Gastrocnemius medialis (tissue), 4 donors: ENCODE measurements at regions of chr16 and their contacts with region 1.

Region 1: DNA sequence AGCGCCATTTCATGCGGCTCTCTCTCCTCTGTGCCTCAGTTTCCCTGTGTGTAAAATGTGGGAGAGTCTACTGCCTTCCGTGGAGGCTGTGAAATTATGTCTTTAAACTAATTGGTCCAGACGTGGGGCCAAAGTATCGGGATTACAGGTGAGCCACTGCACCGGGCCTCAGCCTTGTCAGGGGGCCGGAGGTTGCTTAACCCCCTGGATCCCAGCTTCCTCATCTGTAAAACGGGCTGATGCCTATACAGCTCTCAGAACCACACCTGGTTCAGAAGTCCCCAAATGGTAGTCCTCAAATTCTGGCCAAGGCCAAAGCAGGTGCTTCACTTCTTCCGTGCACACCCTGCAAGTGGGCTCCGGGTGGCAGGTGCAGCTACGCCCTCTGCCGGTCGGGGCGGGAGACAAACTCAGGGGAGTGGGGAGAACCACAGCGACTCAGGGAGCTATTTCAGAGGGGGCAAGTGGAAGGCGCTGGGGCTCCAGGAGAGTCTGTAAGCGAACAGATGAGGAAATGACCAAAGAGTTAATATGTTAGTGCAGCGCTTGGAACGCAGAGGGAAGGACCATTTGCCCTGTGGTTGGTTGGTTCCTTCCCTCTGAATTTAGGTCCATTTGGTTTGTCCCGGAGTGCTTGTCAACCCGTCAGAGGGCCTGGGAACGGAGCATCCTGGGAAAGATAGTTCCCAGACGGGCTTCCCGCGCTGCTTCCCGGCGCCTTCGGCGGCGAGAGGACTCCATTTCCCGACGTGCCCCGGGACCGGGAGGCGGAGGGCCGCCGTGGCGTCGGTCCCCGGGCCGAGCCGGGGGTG is at the start of gene MGRN1:
- DNase-seq: peak; percentile 93 to 95
- ATAC-seq: peak; percentile 97 to 98
- H3K4me3 ChIP-seq: peak within 1 kb of the TSS; percentile 77 to 97 (median 82)
- H3K27ac ChIP-seq: peak within 1 kb of the TSS; percentile 88 to 96 (median 94)
- H3K4me1 ChIP-seq: peaks cover 19% of the 10 kb centered on the region in 2 donors
- H3K27me3 ChIP-seq: no peaks in the 10 kb centered on the region
- CTCF ChIP-seq: peak; percentile 91 to 97 (median 95)
- POLR2A ChIP-seq: no peak
- total RNA-seq, gene MGRN1: 33.8 to 62.9 (median 55.0) TPM

Region 2: DNA sequence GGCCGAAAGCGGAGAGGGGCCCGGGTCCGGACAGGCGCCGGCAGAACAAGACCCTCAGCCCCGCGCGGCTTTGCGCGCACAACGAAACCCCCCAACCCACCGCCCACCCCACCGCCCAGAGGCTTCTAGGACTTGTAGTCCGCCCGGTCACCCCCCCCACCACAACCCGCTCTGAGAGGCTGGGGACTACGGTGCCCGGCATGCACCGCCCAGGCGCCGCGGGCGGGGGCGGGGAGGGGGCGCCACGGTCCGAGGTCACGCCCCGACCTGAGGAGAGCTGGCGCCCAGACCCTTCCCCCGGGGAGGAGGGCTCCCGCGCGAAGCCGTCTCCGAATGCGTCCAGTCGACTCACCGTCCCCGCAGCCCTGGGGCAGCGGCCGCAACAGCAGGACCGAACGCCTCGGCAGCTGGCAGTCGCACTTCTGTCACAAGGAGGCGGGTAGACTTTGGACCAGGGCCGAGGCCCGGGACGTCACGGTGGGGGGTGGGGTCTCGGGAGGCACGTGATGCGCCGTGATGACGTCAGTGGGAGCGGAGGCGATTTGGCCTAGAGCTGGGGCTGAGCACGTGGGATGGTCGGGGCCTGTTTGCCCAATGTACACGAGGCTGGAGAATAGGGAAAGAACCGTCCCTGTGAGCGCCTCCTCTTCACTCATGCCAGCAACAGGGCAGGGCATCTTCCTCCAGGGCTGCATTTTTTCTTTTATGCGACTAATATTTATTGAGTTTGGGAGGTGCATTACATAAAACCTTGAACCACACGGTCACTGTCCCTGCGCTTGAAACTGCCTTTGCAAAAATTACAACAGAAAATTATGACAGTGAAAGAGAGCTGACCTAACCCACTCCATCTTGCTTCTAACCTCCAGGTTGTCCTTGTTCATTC is 85.6 kb before region 1 on chr16 and contains the start of gene CDIP1:
- in situ Hi-C with region 1: no loop called
- intact Hi-C with region 1: loop called (anchors 2 kb)
- DNase-seq: peak; percentile 91 to 96
- ATAC-seq: peak; percentile 92 to 93
- H3K4me3 ChIP-seq: peak within 1 kb of the TSS; percentile 67 to 90 (median 71)
- H3K27ac ChIP-seq: peak within 1 kb of the TSS; percentile 85 to 98 (median 93)
- H3K4me1 ChIP-seq: peaks cover 27 to 34% of the 10 kb centered on the region in 2 donors
- H3K27me3 ChIP-seq: no peaks in the 10 kb centered on the region
- CTCF ChIP-seq: peak in 2 of 5 experiments; percentile 7 to 15
- POLR2A ChIP-seq: peak; percentile 86 to 87
- total RNA-seq, gene CDIP1: 23.8 to 34.2 (median 25.4) TPM

Region 3: DNA sequence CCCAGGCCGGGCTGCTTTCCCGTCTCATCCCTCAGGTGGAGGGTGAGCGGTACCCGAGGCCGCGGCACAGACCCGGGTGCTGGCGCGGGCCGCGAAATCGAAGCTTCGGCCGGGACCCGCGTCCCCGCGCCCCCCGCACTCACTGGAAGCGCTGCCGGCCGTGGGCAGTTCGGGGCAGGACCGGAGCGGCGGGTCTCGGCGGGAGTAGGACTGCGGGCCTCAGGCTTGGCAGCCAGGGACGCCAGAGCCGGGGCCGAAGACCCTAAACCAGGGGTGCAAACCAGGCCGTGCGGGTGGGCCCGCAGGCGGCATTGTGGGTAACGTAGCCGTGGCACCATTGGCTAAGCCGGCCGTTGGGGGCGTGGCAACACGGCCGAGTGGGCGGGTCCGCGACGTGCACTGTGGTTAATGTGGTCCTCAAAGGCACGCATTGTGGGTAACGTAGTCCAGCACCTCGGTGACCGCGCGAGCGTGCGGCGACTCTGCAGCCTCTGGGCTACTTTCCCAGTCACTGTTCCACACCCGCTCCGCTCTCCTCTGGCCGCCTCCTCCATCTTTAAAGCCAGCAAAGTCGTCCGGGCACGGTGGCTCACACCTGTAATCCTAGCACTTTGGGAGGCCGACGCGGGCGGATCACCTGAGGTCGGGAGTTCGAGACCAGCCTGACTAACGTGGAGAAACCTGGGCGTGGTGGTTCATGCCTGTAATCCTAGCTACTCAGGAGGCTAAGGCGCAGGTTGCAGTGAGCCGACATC is 142.8 kb after region 1 on chr16 and contains the start of gene ZNF500:
- in situ Hi-C with region 1: no loop called
- intact Hi-C with region 1: no loop called
- DNase-seq: peak; percentile 97 to 98
- ATAC-seq: peak; percentile 89 to 95
- H3K4me3 ChIP-seq: peak within 1 kb of the TSS; percentile 80 to 99 (median 90)
- H3K27ac ChIP-seq: peak within 1 kb of the TSS; percentile 83 to 95 (median 92)
- H3K4me1 ChIP-seq: peaks cover 25 to 30% of the 10 kb centered on the region in 2 donors
- H3K27me3 ChIP-seq: no peaks in the 10 kb centered on the region
- CTCF ChIP-seq: no peak
- POLR2A ChIP-seq: peak; percentile 69 to 70
- total RNA-seq, gene ZNF500: 6.3 to 7.3 (median 6.9) TPM